Activated CD8-positive, alpha-beta T cell treated with anti-CD3 and anti-CD28 coated beads, Interleukin-2, amount 10 ng/mL, durations not matched to agents 7 days and 5 days (primary cell): ENCODE measurements at regions of chr17 and their contacts with region 1.

Region 1: DNA sequence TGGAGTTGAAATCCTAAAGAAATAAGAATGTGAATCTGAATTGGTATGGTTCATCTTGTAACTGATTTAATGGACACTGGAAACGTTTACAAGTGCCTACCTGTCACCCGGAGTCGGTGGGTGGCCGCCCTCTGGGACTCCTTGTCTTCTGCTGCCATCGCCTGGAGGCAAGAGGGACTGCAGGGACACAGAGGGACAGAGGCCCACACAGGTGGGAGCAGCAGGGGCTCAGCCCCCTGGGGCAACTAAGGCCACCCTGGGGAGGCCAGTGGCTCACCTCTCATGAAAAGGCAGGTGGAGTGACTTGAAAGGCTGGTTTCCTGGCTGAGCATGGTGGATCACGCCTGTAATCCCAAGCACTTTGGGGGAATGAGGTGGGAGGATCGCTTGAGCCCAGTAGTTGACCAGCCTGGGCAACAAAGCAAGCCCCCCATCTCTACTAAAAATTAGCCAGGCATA is 23.2 kb downstream of the TMEM92 start:
- DNase-seq: peak; percentile 85
- ATAC-seq: peak; percentile 95
- H3K4me3 Mint-ChIP-seq: no peak overlapping the region
- H3K27ac Mint-ChIP-seq: no peak overlapping the region
- H3K4me1 Mint-ChIP-seq: peaks cover 5% of the 10 kb centered on the region
- H3K27me3 Mint-ChIP-seq: peaks cover 9% of the 10 kb centered on the region

Region 2: GRCh38 chr17:50114849-50115357 is 182.5 kb before region 1 on chr17:
- CTCF ChIA-PET with region 1: interaction called, 10 read pairs
- POLR2A ChIA-PET with region 1: no interaction called
- DNase-seq: peak; percentile 73
- ATAC-seq: peak; percentile 46
- H3K4me3 Mint-ChIP-seq: no peak overlapping the region
- H3K27ac Mint-ChIP-seq: no peak overlapping the region
- H3K4me1 Mint-ChIP-seq: peaks cover 11% of the 10 kb centered on the region
- H3K27me3 Mint-ChIP-seq: peaks cover 40% of the 10 kb centered on the region

Region 3: DNA sequence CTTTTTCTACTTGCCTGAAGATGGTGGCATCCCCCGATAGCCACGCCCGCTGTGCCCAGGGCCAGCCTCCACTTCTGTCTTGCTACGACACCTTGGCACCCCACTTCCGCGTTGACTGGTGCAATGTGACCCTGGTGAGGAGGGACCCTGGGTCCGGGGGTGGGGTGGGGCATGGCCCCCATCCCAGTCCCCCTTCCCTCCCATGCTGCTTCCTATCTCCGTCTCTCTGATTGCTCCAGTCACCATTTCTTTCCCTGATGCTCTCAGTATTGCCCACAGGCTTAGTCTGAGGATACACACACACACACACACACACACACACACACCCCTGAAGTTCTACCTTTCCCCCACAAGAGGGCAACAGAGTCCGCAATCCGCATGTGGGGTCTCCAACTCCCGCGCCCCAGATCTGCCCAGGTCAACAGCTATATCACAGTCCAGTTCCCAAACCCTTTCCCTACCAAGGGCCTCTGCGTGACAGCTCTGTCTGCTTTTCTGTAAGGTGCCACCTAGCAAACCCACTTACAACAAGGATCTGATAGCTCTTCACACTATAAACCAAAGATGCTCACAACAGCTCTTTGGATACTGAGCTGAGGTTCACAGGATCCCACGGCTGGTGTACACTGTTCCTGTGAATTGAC is 128.2 kb before region 1 on chr17:
- CTCF ChIA-PET with region 1: interaction called, 28 read pairs
- POLR2A ChIA-PET with region 1: no interaction called
- DNase-seq: peak; percentile 66
- ATAC-seq: peak; percentile 69
- H3K4me3 Mint-ChIP-seq: peak overlapping the region; percentile 7
- H3K27ac Mint-ChIP-seq: peak overlapping the region; percentile 53
- H3K4me1 Mint-ChIP-seq: peaks cover 17% of the 10 kb centered on the region
- H3K27me3 Mint-ChIP-seq: no peaks in the 10 kb centered on the region

Region 4: GRCh38 chr17:50213026-50214022 is 84.1 kb before region 1 on chr17:
- CTCF ChIA-PET with region 1: interaction called, 17 read pairs
- POLR2A ChIA-PET with region 1: no interaction called
- DNase-seq: peak; percentile 68
- ATAC-seq: peak; percentile 86
- H3K4me3 Mint-ChIP-seq: no peak overlapping the region
- H3K27ac Mint-ChIP-seq: peak overlapping the region; percentile 70
- H3K4me1 Mint-ChIP-seq: peaks cover 10% of the 10 kb centered on the region
- H3K27me3 Mint-ChIP-seq: peaks cover 53% of the 10 kb centered on the region

Region 5: DNA sequence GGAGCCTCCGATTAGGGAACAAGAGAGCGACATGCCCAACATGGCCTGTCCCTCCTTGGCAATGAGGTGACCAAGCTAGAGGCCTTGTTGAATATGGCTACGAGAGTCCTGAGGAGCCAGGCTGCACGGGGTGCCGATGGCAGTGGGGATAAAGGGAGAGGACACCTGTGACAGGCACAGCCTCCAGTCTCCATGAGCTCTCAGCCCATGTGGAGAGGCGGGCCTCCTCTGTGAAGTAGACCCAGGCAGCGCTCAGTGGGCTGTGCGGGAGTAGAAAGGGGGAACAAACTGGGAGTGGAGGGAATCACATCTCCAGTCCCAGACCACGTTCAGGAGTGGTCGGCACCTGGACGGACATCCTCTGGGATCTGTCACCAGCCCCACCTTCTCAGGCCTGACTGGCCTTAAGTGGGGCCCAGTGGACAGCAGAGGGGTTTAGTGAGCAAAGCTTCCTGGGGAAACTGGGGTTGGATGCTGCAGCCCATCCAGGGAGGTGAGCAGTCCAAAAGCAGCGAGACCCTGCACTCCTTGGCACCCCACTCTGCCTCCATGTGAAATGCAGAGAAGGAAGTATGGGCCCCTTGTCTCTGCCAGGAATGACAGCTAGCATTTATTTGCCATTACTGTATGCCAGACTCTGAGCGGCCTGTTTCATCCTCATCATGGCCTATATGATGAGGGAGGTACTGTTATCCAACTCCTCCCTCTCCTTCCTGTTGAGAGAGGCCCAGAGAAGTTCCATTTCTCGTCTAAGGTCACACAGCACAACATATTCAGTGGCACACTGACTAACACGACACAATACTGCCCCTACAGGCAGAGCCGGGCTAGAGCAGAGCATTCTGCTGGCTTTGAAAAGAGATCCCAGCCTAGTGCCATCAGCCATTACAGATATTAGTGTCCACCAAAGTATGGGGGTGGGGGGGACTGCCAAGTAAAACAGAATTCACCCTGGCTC is 27.7 kb before region 1 on chr17:
- CTCF ChIA-PET with region 1: interaction called, 46 read pairs
- POLR2A ChIA-PET with region 1: no interaction called
- DNase-seq: peak; percentile 80
- ATAC-seq: peak; percentile 82
- H3K4me3 Mint-ChIP-seq: no peak overlapping the region
- H3K27ac Mint-ChIP-seq: no peak overlapping the region
- H3K4me1 Mint-ChIP-seq: peaks cover 18% of the 10 kb centered on the region
- H3K27me3 Mint-ChIP-seq: peaks cover 18% of the 10 kb centered on the region

Region 6: GRCh38 chr17:50283246-50283645 is 14.2 kb before region 1 on chr17:
- CTCF ChIA-PET with region 1: interaction called, 12 read pairs
- POLR2A ChIA-PET with region 1: no interaction called
- DNase-seq: no peak
- ATAC-seq: no peak
- H3K4me3 Mint-ChIP-seq: no peak overlapping the region
- H3K27ac Mint-ChIP-seq: no peak overlapping the region
- H3K4me1 Mint-ChIP-seq: peaks cover 11% of the 10 kb centered on the region
- H3K27me3 Mint-ChIP-seq: peaks cover 20% of the 10 kb centered on the region